ENCODE measurements at regions of chr5 and their contacts with region 1.

Region 1: GRCh38 chr5:177509381-177509951 is at the start of gene DOK3:
- DNase-seq: peak; percentile 52
- ATAC-seq: peak; percentile 33
- H3K4me3 Mint-ChIP-seq: peak within 1 kb of the TSS; percentile 93
- H3K27ac Mint-ChIP-seq: peak within 1 kb of the TSS; percentile 96
- H3K4me1 Mint-ChIP-seq: peaks cover 60% of the 10 kb centered on the region
- H3K27me3 Mint-ChIP-seq: no peaks in the 10 kb centered on the region
- CTCF ChIP-seq: no peak
- total RNA-seq, gene DOK3: 82.5 and 88.5 TPM in 2 replicates

Region 2: DNA sequence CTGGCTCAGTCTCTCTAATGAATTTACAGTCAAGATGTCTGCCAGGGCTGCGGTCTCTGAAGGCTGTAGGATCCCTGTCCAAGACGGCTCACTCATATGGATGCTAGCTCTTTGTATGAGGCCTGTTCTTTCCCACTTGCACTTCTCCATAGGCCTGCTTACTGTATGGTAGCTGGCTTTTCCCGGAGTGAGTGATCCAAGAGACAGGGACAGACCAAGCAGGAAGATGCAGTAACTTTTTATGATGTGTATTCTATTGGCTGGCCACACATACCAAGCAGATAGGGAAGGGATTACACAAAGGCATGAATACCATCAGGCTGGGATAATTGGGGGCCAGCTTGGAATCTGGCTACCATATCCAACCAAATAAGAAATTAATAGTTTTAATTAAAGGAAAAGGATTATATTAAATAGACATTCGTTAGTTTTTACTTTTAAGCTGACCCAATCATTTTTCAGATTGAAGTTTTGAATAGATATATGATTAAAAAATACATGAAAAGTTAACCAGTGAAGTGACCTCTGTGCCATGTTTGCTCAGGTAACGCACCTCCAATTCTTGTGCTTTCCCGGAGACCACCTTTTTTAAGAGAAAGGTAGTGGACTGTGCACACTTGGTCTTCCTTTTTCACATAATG is 355.3 kb before region 1 on chr5:
- CTCF ChIA-PET with region 1: no interaction called
- POLR2A ChIA-PET with region 1: no interaction called
- intact Hi-C with region 1: no loop called
- DNase-seq: no peak
- ATAC-seq: no peak
- H3K4me3 Mint-ChIP-seq: no peak overlapping the region
- H3K27ac Mint-ChIP-seq: no peak overlapping the region
- H3K4me1 Mint-ChIP-seq: peaks cover 20% of the 10 kb centered on the region
- H3K27me3 Mint-ChIP-seq: no peaks in the 10 kb centered on the region
- CTCF ChIP-seq: no peak

Region 3: DNA sequence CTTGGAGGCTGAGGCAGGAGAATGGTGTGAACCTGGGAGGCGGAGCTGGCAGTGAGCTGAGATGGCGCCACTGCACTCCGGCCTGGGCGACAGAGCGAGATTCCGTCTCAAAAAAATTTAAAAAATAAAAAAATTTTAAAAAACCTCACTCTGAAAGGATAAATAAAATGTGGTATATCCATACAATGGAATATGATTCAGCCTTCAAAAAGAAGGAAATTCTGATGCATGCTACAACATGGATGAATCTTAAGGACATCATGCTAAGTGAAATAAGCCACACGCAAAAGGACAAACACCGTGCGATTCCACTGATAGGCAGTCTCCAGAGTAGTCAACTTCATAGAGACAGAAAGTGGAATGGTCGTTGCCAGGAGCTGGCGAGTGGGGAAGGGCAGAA is 44.4 kb before region 1 on chr5:
- CTCF ChIA-PET with region 1: no interaction called
- POLR2A ChIA-PET with region 1: no interaction called
- intact Hi-C with region 1: no loop called
- DNase-seq: no peak
- ATAC-seq: no peak
- H3K4me3 Mint-ChIP-seq: no peak overlapping the region
- H3K27ac Mint-ChIP-seq: no peak overlapping the region
- H3K4me1 Mint-ChIP-seq: peaks cover 2% of the 10 kb centered on the region
- H3K27me3 Mint-ChIP-seq: no peaks in the 10 kb centered on the region
- CTCF ChIP-seq: no peak

Region 4: DNA sequence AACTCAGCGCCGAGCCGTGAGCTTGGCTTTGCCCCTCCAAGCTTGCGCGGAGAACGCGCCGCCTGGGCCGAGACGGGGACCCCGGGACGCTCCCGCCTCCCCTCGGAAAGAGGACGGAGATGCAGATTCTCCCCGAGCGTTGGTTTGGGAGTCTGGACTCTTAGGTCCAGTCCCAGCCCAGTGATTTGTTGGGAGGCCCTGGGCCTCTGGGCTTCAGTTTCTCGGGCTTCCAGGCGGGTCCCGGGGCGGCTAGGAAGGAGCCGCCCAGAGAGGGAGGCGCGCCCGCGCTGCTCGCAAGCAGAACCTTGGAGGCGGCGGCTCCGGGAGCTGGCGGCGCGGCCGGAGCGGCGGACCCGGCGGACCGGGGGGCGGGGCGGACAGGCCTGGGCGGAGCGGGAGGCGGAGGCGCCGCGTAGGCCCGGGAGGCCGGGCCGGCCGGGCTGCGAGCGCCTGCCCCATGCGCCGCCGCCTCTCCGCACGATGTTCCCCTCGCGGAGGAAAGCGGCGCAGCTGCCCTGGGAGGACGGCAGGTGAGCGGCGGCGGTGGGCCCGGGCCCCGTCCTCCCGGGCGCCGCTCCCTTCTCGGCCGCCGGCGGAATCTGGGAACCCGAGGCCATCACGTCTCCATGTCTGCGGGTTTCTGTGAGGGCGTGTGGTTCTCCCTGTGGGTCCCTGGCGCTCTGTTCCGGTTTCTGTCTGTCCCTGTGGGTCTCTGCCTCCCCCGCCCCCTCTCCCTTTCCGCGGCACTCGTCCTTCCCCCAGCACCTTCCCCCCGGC is 90.5 kb after region 1 on chr5 and contains the start of gene B4GALT7:
- CTCF ChIA-PET with region 1: interaction called, 4 read pairs
- POLR2A ChIA-PET with region 1: interaction called, 28 read pairs
- intact Hi-C with region 1: no loop called
- DNase-seq: peak; percentile 75
- ATAC-seq: peak; percentile 89
- H3K4me3 Mint-ChIP-seq: peak within 1 kb of the TSS; percentile 91
- H3K27ac Mint-ChIP-seq: peak within 1 kb of the TSS; percentile 93
- H3K4me1 Mint-ChIP-seq: peaks cover 28% of the 10 kb centered on the region
- H3K27me3 Mint-ChIP-seq: no peaks in the 10 kb centered on the region
- CTCF ChIP-seq: no peak
- total RNA-seq, gene B4GALT7: 36.3 and 42.3 TPM in 2 replicates

Region 5: DNA sequence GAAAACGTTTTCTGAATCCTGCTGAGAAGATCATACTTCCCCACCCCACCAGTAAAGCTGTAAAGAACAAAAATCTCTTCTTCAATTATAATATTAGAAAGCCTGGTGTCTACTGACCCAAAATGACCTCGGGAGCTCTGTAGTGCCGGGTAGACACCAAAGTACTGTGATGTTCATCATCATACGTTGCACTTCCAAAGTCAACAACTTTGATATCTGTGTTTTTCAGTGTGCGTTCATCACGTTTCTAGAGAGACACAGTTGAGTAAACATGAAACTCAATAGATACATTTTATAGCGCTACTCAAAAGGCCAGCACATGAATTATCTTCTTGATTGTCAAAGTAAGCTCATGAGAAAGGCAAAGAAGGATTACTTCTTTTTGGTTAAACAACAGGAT is 1102.8 kb after region 1 on chr5:
- CTCF ChIA-PET with region 1: no interaction called
- POLR2A ChIA-PET with region 1: no interaction called
- intact Hi-C with region 1: no loop called
- DNase-seq: no peak
- ATAC-seq: no peak
- H3K4me3 Mint-ChIP-seq: no peak overlapping the region
- H3K27ac Mint-ChIP-seq: no peak overlapping the region
- H3K4me1 Mint-ChIP-seq: no peaks in the 10 kb centered on the region
- H3K27me3 Mint-ChIP-seq: no peaks in the 10 kb centered on the region
- CTCF ChIP-seq: no peak

Measured in activated B cell treated with CpG ODN at 0.5 μM for 24 hours (primary cell).